Natural killer cell (primary cell): ENCODE measurements at regions of chr12 and their contacts with region 1.

Region 1: DNA sequence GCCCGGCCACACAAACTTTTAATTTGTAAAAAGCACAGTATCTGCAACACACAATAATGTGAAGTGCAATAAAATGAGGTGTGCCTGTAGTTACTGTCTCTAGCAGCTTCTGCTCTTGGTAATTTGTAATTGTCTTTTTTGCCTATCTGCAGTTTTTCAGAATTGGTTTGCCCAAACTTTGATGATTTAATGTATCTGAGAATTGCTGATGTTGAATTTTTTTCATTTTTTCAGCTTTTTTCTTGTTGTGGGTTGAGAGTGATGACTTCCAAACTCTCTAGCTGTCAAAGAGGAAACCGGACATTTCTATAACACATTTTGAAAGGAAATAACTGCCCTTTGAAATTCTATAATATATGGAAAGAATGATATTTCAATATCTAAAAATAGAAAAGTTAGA is 236.9 kb downstream of the RERGL start:
- DNase-seq: no peak
- ATAC-seq: no peak
- H3K4me3 ChIP-seq: no peak overlapping the region
- H3K4me3 Mint-ChIP-seq: no peak overlapping the region
- H3K27ac ChIP-seq: no peak overlapping the region
- H3K27ac Mint-ChIP-seq: no peak overlapping the region
- H3K4me1 ChIP-seq: no peaks in the 10 kb centered on the region
- H3K4me1 Mint-ChIP-seq: no peaks in the 10 kb centered on the region
- H3K27me3 ChIP-seq: no peaks in the 10 kb centered on the region
- H3K27me3 Mint-ChIP-seq: no peaks in the 10 kb centered on the region
- CTCF ChIP-seq: no peak

Region 2: DNA sequence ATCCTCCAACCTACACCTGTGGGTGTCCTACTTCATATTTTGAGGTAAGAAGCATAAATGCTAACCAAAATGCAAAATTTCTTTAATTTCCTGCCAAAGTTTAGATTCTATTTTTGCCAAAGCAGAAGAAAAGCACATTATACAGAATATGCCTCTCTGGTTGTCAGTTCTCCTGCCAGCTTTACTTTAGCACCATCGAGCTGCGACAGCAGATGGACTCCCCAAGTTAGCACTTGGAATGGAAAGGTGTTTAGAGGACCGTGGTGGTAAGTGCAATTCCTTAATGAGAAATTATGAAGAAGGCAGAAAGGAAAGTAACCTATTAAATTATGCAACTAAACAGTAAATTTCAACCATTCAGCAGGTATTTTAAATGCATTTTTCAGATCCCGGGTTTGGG is 89.7 kb before region 1 on chr12:
- intact Hi-C with region 1: loop called (anchors 2 kb)
- DNase-seq: no peak
- ATAC-seq: no peak
- H3K4me3 ChIP-seq: no peak overlapping the region
- H3K4me3 Mint-ChIP-seq: no peak overlapping the region
- H3K27ac ChIP-seq: no peak overlapping the region
- H3K27ac Mint-ChIP-seq: no peak overlapping the region
- H3K4me1 ChIP-seq: no peaks in the 10 kb centered on the region
- H3K4me1 Mint-ChIP-seq: no peaks in the 10 kb centered on the region
- H3K27me3 ChIP-seq: no peaks in the 10 kb centered on the region
- H3K27me3 Mint-ChIP-seq: no peaks in the 10 kb centered on the region
- CTCF ChIP-seq: no peak

Region 3: DNA sequence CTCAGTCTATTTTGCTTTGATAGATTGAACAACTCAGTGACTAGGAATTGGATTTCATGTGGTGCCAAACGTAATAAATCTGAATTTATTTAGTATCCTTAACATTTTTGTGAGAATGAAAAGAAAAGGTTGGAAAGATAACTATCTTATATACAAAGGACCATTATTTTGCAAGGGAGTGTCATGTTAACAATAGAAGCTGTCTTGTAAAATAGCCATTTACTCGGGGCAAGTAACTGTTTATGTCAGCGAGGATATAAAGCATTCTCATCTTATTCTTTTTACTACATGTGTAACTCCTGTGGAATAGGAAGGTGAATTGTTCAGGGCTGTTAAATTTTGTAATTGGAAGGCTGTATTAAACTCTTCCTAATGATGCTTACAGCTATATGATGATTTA is 231.0 kb after region 1 on chr12:
- intact Hi-C with region 1: no loop called
- DNase-seq: no peak
- ATAC-seq: no peak
- H3K4me3 ChIP-seq: no peak overlapping the region
- H3K4me3 Mint-ChIP-seq: no peak overlapping the region
- H3K27ac ChIP-seq: no peak overlapping the region
- H3K27ac Mint-ChIP-seq: no peak overlapping the region
- H3K4me1 ChIP-seq: no peaks in the 10 kb centered on the region
- H3K4me1 Mint-ChIP-seq: no peaks in the 10 kb centered on the region
- H3K27me3 ChIP-seq: no peaks in the 10 kb centered on the region
- H3K27me3 Mint-ChIP-seq: no peaks in the 10 kb centered on the region
- CTCF ChIP-seq: no peak